Naive thymus-derived CD4-positive, alpha-beta T cell (primary cell): ENCODE measurements at regions of chr5 and their contacts with region 1.

Region 1: DNA sequence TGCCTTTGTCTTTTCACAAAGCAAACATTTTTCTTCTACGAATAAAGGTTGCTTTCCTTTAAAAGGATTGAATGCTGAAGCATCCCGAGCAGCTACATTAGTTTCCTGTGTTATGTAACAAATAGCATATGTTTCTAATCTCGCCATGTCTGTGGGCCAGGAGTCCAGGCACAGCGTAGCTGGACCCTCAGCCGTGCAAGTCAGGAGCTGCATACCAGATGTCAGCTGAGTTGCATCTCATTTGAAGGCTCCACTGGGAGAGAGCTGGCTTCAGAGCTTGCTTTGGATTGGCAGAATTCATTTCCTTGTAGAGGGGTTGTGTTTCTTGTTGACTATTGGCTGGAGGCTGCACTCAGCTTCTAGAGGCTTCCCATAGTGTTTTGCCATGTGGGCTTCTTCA is 16.0 kb upstream of the GOLPH3 start:
- DNase-seq: no peak
- ATAC-seq: no peak
- H3K4me3 ChIP-seq: no peak overlapping the region
- H3K4me3 Mint-ChIP-seq: no peak overlapping the region
- H3K27ac ChIP-seq: no peak overlapping the region
- H3K27ac Mint-ChIP-seq: no peak overlapping the region
- H3K4me1 ChIP-seq: no peaks in the 10 kb centered on the region
- H3K4me1 Mint-ChIP-seq: peaks cover 0 to 7% (median 0%) of the 10 kb centered on the region in 7 donors
- H3K27me3 ChIP-seq: no peaks in the 10 kb centered on the region
- H3K27me3 Mint-ChIP-seq: peaks cover 9 to 21% (median 10%) of the 10 kb centered on the region in 5 donors

Region 2: DNA sequence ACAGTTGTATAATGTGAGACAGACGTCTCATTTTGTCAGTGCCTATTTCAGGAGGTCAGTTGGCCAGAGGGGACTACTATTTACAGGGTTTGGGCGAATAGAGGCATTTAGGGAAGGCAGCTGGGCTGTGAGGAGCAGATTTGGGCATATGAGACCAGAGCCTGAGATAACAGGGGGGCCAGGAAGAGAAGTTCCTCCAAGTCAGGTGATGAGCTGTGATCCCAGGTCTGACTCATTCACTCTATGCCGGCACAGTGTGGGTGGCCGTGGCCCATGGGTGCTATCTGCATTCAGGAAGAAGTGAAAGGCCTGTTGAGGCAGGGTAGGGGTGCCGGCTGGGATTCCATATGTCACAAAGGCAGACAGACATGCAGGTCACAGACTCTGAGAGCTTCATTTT is 408.3 kb before region 1 on chr5:
- CTCF ChIA-PET with region 1: no interaction called
- POLR2A ChIA-PET with region 1: no interaction called
- intact Hi-C with region 1: no loop called
- DNase-seq: no peak
- ATAC-seq: no peak
- H3K4me3 ChIP-seq: no peak overlapping the region
- H3K4me3 Mint-ChIP-seq: no peak overlapping the region
- H3K27ac ChIP-seq: no peak overlapping the region
- H3K27ac Mint-ChIP-seq: no peak overlapping the region
- H3K4me1 ChIP-seq: no peaks in the 10 kb centered on the region
- H3K4me1 Mint-ChIP-seq: no peaks in the 10 kb centered on the region
- H3K27me3 ChIP-seq: no peaks in the 10 kb centered on the region
- H3K27me3 Mint-ChIP-seq: peaks cover 0 to 6% (median 0%) of the 10 kb centered on the region in 5 donors

Region 3: GRCh38 chr5:32153723-32154122 is 36.4 kb before region 1 on chr5:
- CTCF ChIA-PET with region 1: no interaction called
- POLR2A ChIA-PET with region 1: no interaction called
- intact Hi-C with region 1: no loop called
- DNase-seq: no peak
- ATAC-seq: no peak
- H3K4me3 ChIP-seq: no peak overlapping the region
- H3K4me3 Mint-ChIP-seq: peak overlapping the region in 4 of 10 donors; percentile 17 to 45 (median 30)
- H3K27ac ChIP-seq: no peak overlapping the region
- H3K27ac Mint-ChIP-seq: no peak overlapping the region
- H3K4me1 ChIP-seq: peaks cover 12 to 15% of the 10 kb centered on the region in 2 donors
- H3K4me1 Mint-ChIP-seq: peaks cover 28 to 59% (median 49%) of the 10 kb centered on the region in 7 donors
- H3K27me3 ChIP-seq: no peaks in the 10 kb centered on the region
- H3K27me3 Mint-ChIP-seq: no peaks in the 10 kb centered on the region

Region 4: DNA sequence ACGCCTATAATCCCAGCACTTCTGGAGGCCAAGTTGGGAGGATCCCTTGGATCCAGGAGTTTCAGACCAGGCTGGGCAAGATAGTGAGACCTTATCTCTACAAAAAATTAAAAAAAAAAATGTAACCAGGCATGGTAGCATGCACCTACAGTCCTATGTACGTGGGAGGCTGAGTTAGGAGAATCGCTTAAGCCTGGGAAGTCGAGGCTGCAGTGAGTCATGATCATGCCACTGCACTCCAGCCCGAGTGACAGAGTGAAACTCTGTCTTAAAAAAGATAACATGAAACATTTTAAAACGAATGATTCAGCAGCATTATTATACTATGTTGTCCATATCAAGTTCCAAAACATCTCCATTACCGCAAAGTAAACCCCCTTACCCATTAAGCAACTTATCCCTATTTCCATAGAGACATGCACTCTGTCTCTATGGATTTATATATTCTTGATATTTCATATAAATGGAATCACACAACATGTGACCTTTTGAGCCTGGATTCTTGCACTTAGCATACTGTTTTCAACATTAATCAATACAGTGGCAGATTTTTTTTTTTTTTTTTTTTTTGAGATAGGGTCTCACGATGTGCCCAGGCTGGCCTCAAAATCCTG is 179.6 kb after region 1 on chr5:
- CTCF ChIA-PET with region 1: no interaction called
- POLR2A ChIA-PET with region 1: interaction called, 11 read pairs
- intact Hi-C with region 1: no loop called
- DNase-seq: no peak
- ATAC-seq: no peak
- H3K4me3 ChIP-seq: no peak overlapping the region
- H3K4me3 Mint-ChIP-seq: no peak overlapping the region
- H3K27ac ChIP-seq: no peak overlapping the region
- H3K27ac Mint-ChIP-seq: no peak overlapping the region
- H3K4me1 ChIP-seq: no peaks in the 10 kb centered on the region
- H3K4me1 Mint-ChIP-seq: peaks cover 0 to 3% (median 0%) of the 10 kb centered on the region in 7 donors
- H3K27me3 ChIP-seq: no peaks in the 10 kb centered on the region
- H3K27me3 Mint-ChIP-seq: no peaks in the 10 kb centered on the region

Region 5: DNA sequence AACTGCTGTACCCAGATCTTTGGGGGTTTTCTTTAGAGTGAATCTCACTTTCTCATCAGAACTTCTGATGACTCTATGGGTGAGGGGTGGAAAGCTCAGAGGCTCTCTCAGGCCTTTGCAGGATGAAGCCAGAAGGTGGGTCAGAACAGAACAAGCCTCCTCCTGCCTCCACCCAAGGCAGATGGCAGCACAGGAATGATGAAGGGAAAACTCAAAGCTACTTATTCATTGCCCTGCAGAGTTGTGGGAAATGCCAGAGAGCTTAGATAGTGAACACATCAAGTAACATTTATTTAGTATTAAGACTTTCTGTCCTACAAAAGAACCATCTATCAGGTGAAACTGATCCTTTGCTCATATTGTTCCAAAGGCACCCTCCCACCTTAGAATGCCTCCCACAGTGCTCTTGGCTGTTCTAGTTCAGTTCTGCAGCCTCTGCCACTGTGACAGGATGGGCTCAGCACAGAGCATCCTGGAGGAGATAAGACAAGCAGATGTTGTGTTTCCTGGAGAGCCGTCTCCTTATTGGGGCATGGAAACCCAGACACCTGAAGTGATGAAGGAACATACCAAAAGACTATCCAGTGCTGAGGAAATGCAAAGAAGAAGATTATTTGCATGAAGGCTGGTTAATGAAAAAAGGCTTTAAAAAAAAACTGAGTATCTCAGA is 1555.1 kb after region 1 on chr5:
- CTCF ChIA-PET with region 1: no interaction called
- POLR2A ChIA-PET with region 1: no interaction called
- intact Hi-C with region 1: no loop called
- DNase-seq: no peak
- ATAC-seq: no peak
- H3K4me3 ChIP-seq: no peak overlapping the region
- H3K4me3 Mint-ChIP-seq: no peak overlapping the region
- H3K27ac ChIP-seq: no peak overlapping the region
- H3K27ac Mint-ChIP-seq: no peak overlapping the region
- H3K4me1 ChIP-seq: no peaks in the 10 kb centered on the region
- H3K4me1 Mint-ChIP-seq: no peaks in the 10 kb centered on the region
- H3K27me3 ChIP-seq: no peaks in the 10 kb centered on the region
- H3K27me3 Mint-ChIP-seq: no peaks in the 10 kb centered on the region